CD14-positive monocyte (primary cell): ENCODE measurements at regions of chr19 and their contacts with region 1.

Region 1: DNA sequence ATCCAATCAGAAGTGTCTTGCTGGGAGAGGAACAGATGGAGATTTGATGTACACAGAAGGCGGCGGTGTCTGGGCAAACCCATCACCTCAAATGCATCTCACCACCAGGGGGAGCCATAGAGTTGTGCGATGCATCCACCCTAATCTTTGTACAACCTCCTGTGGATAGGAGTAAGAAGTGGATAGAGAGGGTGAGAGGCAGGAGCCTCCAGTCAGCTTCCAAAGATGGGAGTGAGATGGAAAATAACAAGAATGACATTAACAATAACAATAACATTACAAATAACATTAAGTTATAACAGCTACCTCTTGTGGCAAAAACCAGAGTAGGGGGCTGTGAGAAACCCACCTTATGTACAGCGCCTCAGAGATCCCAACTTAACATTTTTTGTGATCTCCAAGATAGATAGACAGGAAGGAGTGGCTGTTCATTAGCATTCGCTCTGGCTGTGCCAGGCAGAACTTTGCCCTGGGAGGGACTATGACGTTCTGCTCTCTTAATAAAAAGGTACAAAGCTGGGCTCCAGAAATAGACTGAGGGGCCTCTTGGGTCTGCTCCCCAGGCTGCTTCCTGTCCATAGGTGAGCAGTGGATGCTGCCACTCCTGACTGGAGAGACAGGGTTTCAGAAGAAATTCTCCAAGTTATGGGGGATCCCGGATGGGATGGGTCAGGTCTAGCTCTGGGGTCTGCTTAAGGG is 5.2 kb upstream of the CEACAM18 start:
- DNase-seq: peak; percentile 76 to 80 (median 78)
- H3K4me3 ChIP-seq: no peak overlapping the region
- H3K4me3 Mint-ChIP-seq: no peak overlapping the region
- H3K27ac ChIP-seq: no peak overlapping the region
- H3K27ac Mint-ChIP-seq: no peak overlapping the region
- H3K4me1 ChIP-seq: peaks cover 5 to 6% of the 10 kb centered on the region in 2 donors
- H3K4me1 Mint-ChIP-seq: peaks cover 10% of the 10 kb centered on the region
- H3K27me3 ChIP-seq: no peaks in the 10 kb centered on the region
- H3K27me3 Mint-ChIP-seq: peaks cover 14 to 25% (median 17%) of the 10 kb centered on the region in 3 donors
- CTCF ChIP-seq: peak; percentile 94

Region 2: DNA sequence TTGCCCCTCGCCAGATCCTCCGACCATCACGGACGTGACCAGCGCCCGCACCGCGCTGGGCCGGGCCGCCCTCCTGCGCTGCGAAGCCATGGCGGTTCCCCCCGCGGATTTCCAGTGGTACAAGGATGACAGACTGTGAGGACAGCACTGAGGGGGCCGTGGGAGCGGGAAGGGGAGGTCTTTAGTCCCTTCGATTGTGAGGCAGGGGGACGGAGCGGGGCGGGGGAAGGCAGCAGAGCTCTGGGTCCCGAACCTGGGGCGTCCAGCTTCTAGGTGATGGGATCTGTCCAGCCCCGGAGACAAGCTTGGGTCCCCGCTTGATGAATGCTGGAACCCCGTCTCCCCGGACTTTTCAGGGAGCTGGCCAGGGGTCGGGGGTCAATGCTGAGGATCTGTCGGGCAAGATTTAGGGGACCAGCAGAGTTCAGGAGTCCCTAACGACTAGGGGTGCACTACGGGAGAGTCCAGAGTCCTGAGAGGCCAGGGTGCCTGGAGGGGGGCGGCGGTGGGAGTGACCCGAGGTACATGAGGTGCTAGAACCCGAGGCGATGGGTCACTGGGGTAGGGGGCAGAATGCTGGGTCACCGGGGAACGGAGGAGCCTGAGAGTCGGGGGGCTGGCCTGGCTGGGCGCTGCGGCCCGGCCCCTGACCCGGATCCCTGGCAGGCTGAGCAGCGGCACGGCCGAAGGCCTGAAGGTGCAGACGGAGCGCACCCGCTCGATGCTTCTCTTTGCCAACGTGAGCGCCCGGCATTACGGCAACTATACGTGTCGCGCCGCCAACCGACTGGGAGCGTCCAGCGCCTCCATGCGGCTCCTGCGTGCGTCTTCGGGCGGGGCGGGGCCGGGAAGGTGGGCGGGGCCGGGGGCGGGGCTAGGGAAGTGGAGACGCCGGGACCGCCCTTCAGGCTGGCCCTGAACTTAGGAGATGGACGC is 145.8 kb before region 1 on chr19:
- intact Hi-C with region 1: no loop called
- DNase-seq: peak; percentile 71 to 77 (median 72)
- H3K4me3 ChIP-seq: peak overlapping the region in 2 of 3 experiments; percentile 3 to 65
- H3K4me3 Mint-ChIP-seq: peak overlapping the region; percentile 60 to 96
- H3K27ac ChIP-seq: no peak overlapping the region
- H3K27ac Mint-ChIP-seq: peak overlapping the region in 5 of 7 donors; percentile 37 to 76 (median 46)
- H3K4me1 ChIP-seq: peaks cover 13 to 28% of the 10 kb centered on the region in 2 donors
- H3K4me1 Mint-ChIP-seq: peaks cover 28% of the 10 kb centered on the region
- H3K27me3 ChIP-seq: peaks cover 12 to 42% of the 10 kb centered on the region in 2 donors
- H3K27me3 Mint-ChIP-seq: peaks cover 43 to 63% (median 50%) of the 10 kb centered on the region in 3 donors
- CTCF ChIP-seq: peak; percentile 24

Region 3: DNA sequence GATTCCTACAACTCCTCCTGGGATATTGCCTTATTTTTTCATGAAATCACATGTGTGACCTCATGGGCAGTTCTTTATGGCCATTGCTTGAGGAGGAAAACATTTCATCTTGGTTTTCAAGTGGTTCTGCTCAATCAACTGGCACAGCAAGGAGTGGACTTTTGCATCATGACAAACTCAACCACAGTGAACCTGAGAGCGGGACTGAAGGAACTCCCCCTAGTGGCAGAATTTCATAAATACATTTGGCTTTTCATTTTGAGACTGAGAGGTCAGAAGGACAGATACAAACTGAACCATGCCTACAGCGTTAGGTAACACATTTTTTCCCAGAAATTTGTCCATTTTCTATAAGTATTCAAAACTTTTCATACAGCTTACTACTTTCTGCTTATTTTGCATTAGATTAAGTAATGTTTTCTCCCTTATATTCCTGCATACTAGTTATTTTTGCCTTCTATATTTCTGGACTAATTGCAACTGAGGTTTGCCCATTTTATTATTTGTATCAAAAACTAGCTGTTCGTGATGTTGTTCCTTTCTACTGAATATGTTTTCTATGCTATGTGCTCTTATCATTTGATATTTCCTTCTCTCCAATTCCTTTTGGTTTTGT is 41.8 kb after region 1 on chr19:
- intact Hi-C with region 1: loop called (anchors 1 to 2 kb)
- DNase-seq: peak; percentile 58 to 71 (median 69)
- H3K4me3 ChIP-seq: no peak overlapping the region
- H3K4me3 Mint-ChIP-seq: no peak overlapping the region
- H3K27ac ChIP-seq: no peak overlapping the region
- H3K27ac Mint-ChIP-seq: no peak overlapping the region
- H3K4me1 ChIP-seq: peaks cover 10 to 15% of the 10 kb centered on the region in 2 donors
- H3K4me1 Mint-ChIP-seq: peaks cover 20% of the 10 kb centered on the region
- H3K27me3 ChIP-seq: no peaks in the 10 kb centered on the region
- H3K27me3 Mint-ChIP-seq: peaks cover 0 to under 1% (median 0%) of the 10 kb centered on the region in 3 donors
- CTCF ChIP-seq: peak; percentile 85

Region 4: DNA sequence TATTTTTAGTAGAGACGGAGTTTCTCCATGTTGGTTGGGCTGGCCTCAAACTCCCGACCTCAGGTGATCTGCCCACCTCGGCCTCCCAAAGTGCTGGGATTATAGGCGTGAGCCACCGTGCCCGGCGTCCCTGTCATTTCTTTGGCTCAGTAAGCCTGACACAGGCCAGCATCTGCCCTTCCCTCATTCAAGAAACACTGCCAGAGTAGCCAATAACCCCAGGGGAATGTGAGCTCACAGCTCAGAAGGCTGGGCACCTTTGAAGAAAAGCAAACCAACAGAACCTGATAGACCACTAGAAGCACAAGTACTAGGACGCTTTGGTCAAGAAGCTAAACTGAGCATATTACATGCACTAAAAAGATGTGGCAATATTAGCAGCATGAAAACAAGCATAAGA is 142.8 kb after region 1 on chr19:
- intact Hi-C with region 1: no loop called
- DNase-seq: no peak
- H3K4me3 ChIP-seq: no peak overlapping the region
- H3K4me3 Mint-ChIP-seq: no peak overlapping the region
- H3K27ac ChIP-seq: no peak overlapping the region
- H3K27ac Mint-ChIP-seq: peak overlapping the region in 1 of 7 donors; percentile 53
- H3K4me1 ChIP-seq: peaks cover 14 to 24% of the 10 kb centered on the region in 2 donors
- H3K4me1 Mint-ChIP-seq: peaks cover 24% of the 10 kb centered on the region
- H3K27me3 ChIP-seq: no peaks in the 10 kb centered on the region
- H3K27me3 Mint-ChIP-seq: peaks cover 0 to 2% (median 1%) of the 10 kb centered on the region in 3 donors
- CTCF ChIP-seq: no peak

Region 5: GRCh38 chr19:51887522-51888498 is 414.7 kb after region 1 on chr19 and contains the start of gene ZNF577:
- intact Hi-C with region 1: no loop called
- DNase-seq: peak; percentile 59 to 73 (median 71)
- H3K4me3 ChIP-seq: peak within 1 kb of the TSS; percentile 44 to 81 (median 67)
- H3K4me3 Mint-ChIP-seq: peak within 1 kb of the TSS; percentile 98 to 99
- H3K27ac ChIP-seq: peak within 1 kb of the TSS; percentile 22 to 71
- H3K27ac Mint-ChIP-seq: peak within 1 kb of the TSS in 6 of 7 donors; percentile 62 to 91 (median 78)
- H3K4me1 ChIP-seq: peaks cover 4 to 12% of the 10 kb centered on the region in 2 donors
- H3K4me1 Mint-ChIP-seq: peaks cover 17% of the 10 kb centered on the region
- H3K27me3 ChIP-seq: no peaks in the 10 kb centered on the region
- H3K27me3 Mint-ChIP-seq: peaks cover 0 to 3% (median 3%) of the 10 kb centered on the region in 3 donors
- CTCF ChIP-seq: no peak
- polyA plus RNA-seq, gene ZNF577: 1.5 to 8.5 (median 1.5) TPM